ENCODE measurements at regions of chr7 and their contacts with region 1.

Region 1: GRCh38 chr7:80151274-80151665 is 16.6 kb downstream of the GNAI1 start:
- DNase-seq: peak; percentile 73
- ATAC-seq: peak; percentile 94
- H3K4me3 Mint-ChIP-seq: no peak overlapping the region
- H3K27ac Mint-ChIP-seq: no peak overlapping the region
- H3K4me1 Mint-ChIP-seq: peaks cover 16% of the 10 kb centered on the region
- H3K27me3 Mint-ChIP-seq: peaks cover 6% of the 10 kb centered on the region
- CTCF ChIP-seq: no peak

Region 2: GRCh38 chr7:80047856-80048459 is 103.3 kb before region 1 on chr7:
- CTCF ChIA-PET with region 1: no interaction called
- POLR2A ChIA-PET with region 1: no interaction called
- intact Hi-C with region 1: no loop called
- DNase-seq: no peak
- ATAC-seq: no peak
- H3K4me3 Mint-ChIP-seq: no peak overlapping the region
- H3K27ac Mint-ChIP-seq: no peak overlapping the region
- H3K4me1 Mint-ChIP-seq: no peaks in the 10 kb centered on the region
- H3K27me3 Mint-ChIP-seq: no peaks in the 10 kb centered on the region
- CTCF ChIP-seq: peak; percentile 14

Region 3: DNA sequence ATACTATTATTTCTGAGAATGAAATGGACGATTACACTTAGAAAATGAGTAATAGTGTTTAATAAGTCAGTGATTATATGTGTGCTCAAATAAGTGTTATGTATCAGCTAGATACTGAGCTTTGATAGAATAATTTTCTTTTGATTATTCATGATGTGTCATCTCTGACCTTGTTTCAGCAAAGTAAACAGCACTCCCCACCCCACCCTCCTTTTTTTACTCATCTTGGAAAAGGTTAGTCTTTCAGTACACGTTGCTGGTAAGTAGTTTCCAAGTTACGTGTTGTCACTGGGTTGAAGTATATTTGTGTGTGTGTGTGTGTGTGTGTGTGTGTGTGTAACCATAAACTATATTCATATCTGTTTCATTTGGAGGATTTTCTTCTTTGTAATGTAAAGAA is 67.5 kb after region 1 on chr7:
- CTCF ChIA-PET with region 1: interaction called, 3 read pairs
- POLR2A ChIA-PET with region 1: no interaction called
- intact Hi-C with region 1: loop called (anchors 5 kb)
- DNase-seq: peak; percentile 28
- ATAC-seq: peak; percentile 74
- H3K4me3 Mint-ChIP-seq: no peak overlapping the region
- H3K27ac Mint-ChIP-seq: no peak overlapping the region
- H3K4me1 Mint-ChIP-seq: peaks cover 6% of the 10 kb centered on the region
- H3K27me3 Mint-ChIP-seq: no peaks in the 10 kb centered on the region
- CTCF ChIP-seq: no peak

Measured in activated CD8-positive, alpha-beta T cell treated with anti-CD3 and anti-CD28 coated beads for 36 hours (primary cell).